ENCODE measurements at regions of chr19 and their contacts with region 1.

Region 1: GRCh38 chr19:7943444-7944176 is at the start of gene TIMM44:
- DNase-seq: peak; percentile 95 to 100 (median 97)
- ATAC-seq: peak; percentile 96
- H3K4me3 ChIP-seq: peak within 1 kb of the TSS; percentile 97
- H3K4me3 Mint-ChIP-seq: peak within 1 kb of the TSS; percentile 95
- H3K27ac ChIP-seq: peak within 1 kb of the TSS; percentile 96 to 97
- H3K27ac Mint-ChIP-seq: peak within 1 kb of the TSS; percentile 87
- H3K4me1 ChIP-seq: peaks cover 30% of the 10 kb centered on the region
- H3K4me1 Mint-ChIP-seq: peaks cover 36% of the 10 kb centered on the region
- H3K27me3 ChIP-seq: no peaks in the 10 kb centered on the region
- H3K27me3 Mint-ChIP-seq: no peaks in the 10 kb centered on the region
- CTCF ChIP-seq: no peak
- total RNA-seq, gene TIMM44: 83.9 to 85.0 TPM

Region 2: GRCh38 chr19:7104747-7105447 is 838.7 kb before region 1 on chr19:
- CTCF ChIA-PET with region 1: no interaction called
- POLR2A ChIA-PET with region 1: no interaction called
- intact Hi-C with region 1: loop called in 1 of 2 experiments (anchors 10 kb)
- DNase-seq: peak in 1 of 14 experiments; percentile 10
- ATAC-seq: no peak
- H3K4me3 ChIP-seq: no peak overlapping the region
- H3K4me3 Mint-ChIP-seq: no peak overlapping the region
- H3K27ac ChIP-seq: no peak overlapping the region
- H3K27ac Mint-ChIP-seq: no peak overlapping the region
- H3K4me1 ChIP-seq: peaks cover 10% of the 10 kb centered on the region
- H3K4me1 Mint-ChIP-seq: peaks cover 22% of the 10 kb centered on the region
- H3K27me3 ChIP-seq: no peaks in the 10 kb centered on the region
- H3K27me3 Mint-ChIP-seq: no peaks in the 10 kb centered on the region
- CTCF ChIP-seq: no peak

Region 3: DNA sequence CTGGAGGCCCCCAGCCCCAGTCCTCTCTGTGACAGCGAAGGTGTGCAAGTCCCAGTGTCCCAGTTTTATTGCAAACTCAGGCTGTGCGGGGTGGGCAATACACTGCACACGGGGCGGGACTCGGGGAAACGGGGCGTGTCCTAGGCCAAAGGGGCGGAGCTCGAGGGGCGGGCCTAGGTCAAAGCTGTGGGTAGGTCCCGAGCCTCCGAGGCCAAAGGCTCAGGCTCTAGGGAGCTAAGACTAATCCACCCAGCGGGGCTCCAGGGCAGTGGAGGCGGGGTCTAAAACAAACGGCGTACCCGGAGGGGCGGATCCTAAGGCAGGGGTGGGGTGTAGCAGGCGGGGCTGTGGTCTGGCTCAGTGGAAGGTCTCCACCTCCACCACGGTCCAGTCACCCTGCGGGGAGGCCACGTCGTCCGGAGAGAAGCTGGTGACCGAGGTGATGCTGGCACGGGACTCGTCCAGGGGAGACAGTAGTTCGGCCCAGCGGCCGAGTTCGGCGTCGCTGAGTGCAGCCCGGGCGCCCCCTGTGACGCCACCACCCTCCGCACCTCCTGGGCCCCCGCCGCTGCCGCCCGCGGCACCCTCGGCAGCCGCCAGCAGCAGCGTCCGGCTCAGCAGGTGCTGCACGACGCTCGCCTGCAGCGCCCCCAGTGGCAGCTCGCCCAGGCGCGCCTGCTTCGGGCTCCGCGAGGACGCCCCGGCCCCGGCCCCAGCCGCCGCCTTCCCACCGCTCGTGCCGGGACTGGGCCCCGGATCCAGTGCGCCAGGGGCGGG is 74.7 kb before region 1 on chr19:
- CTCF ChIA-PET with region 1: interaction called, 5 read pairs
- POLR2A ChIA-PET with region 1: interaction called, 17 read pairs
- intact Hi-C with region 1: loop called in 1 of 2 experiments (anchors 2 kb)
- DNase-seq: peak; percentile 69 to 96 (median 84)
- ATAC-seq: peak; percentile 69
- H3K4me3 ChIP-seq: peak overlapping the region; percentile 62
- H3K4me3 Mint-ChIP-seq: peak overlapping the region; percentile 87
- H3K27ac ChIP-seq: peak overlapping the region; percentile 67 to 72
- H3K27ac Mint-ChIP-seq: peak overlapping the region; percentile 80
- H3K4me1 ChIP-seq: peaks cover 70% of the 10 kb centered on the region
- H3K4me1 Mint-ChIP-seq: peaks cover 39% of the 10 kb centered on the region
- H3K27me3 ChIP-seq: peaks cover 20 to 21% of the 10 kb centered on the region in 2 experiments
- H3K27me3 Mint-ChIP-seq: peaks cover 33% of the 10 kb centered on the region
- CTCF ChIP-seq: peak; percentile 69

Region 4: GRCh38 chr19:7883796-7884570 is 59.6 kb before region 1 on chr19:
- CTCF ChIA-PET with region 1: no interaction called
- POLR2A ChIA-PET with region 1: no interaction called
- intact Hi-C with region 1: no loop called
- DNase-seq: no peak
- ATAC-seq: no peak
- H3K4me3 ChIP-seq: no peak overlapping the region
- H3K4me3 Mint-ChIP-seq: no peak overlapping the region
- H3K27ac ChIP-seq: no peak overlapping the region
- H3K27ac Mint-ChIP-seq: no peak overlapping the region
- H3K4me1 ChIP-seq: peaks cover 9% of the 10 kb centered on the region
- H3K4me1 Mint-ChIP-seq: no peaks in the 10 kb centered on the region
- H3K27me3 ChIP-seq: peaks cover 14 to 16% of the 10 kb centered on the region in 2 experiments
- H3K27me3 Mint-ChIP-seq: peaks cover 8% of the 10 kb centered on the region
- CTCF ChIP-seq: no peak

Region 5: GRCh38 chr19:7919610-7920518 is 23.7 kb before region 1 on chr19 and contains the start of gene SNAPC2:
- CTCF ChIA-PET with region 1: interaction called, 22 read pairs
- POLR2A ChIA-PET with region 1: interaction called, 47 read pairs
- intact Hi-C with region 1: no loop called
- DNase-seq: peak; percentile 93 to 98 (median 96)
- ATAC-seq: peak; percentile 64
- H3K4me3 ChIP-seq: peak within 1 kb of the TSS; percentile 69
- H3K4me3 Mint-ChIP-seq: peak within 1 kb of the TSS; percentile 94
- H3K27ac ChIP-seq: peak within 1 kb of the TSS; percentile 78 to 79
- H3K27ac Mint-ChIP-seq: peak within 1 kb of the TSS; percentile 79
- H3K4me1 ChIP-seq: peaks cover 70% of the 10 kb centered on the region
- H3K4me1 Mint-ChIP-seq: peaks cover 37% of the 10 kb centered on the region
- H3K27me3 ChIP-seq: peaks cover 34 to 35% of the 10 kb centered on the region in 2 experiments
- H3K27me3 Mint-ChIP-seq: peaks cover 37% of the 10 kb centered on the region
- CTCF ChIP-seq: no peak
- total RNA-seq, gene SNAPC2: 9.9 to 10.9 TPM

Region 6: GRCh38 chr19:8005534-8006256 is 62.1 kb after region 1 on chr19 and contains the start of gene ELAVL1:
- CTCF ChIA-PET with region 1: interaction called, 23 read pairs
- POLR2A ChIA-PET with region 1: interaction called, 14 read pairs
- intact Hi-C with region 1: loop called (anchors 1 to 10 kb)
- DNase-seq: peak; percentile 72 to 96 (median 88)
- ATAC-seq: peak; percentile 94
- H3K4me3 ChIP-seq: peak within 1 kb of the TSS; percentile 84
- H3K4me3 Mint-ChIP-seq: peak within 1 kb of the TSS; percentile 95
- H3K27ac ChIP-seq: peak within 1 kb of the TSS; percentile 61 to 74
- H3K27ac Mint-ChIP-seq: peak within 1 kb of the TSS; percentile 84
- H3K4me1 ChIP-seq: peaks cover 45% of the 10 kb centered on the region
- H3K4me1 Mint-ChIP-seq: peaks cover 42% of the 10 kb centered on the region
- H3K27me3 ChIP-seq: no peaks in the 10 kb centered on the region
- H3K27me3 Mint-ChIP-seq: no peaks in the 10 kb centered on the region
- CTCF ChIP-seq: no peak
- total RNA-seq, gene ELAVL1: 17.1 to 20.8 TPM

Region 7: DNA sequence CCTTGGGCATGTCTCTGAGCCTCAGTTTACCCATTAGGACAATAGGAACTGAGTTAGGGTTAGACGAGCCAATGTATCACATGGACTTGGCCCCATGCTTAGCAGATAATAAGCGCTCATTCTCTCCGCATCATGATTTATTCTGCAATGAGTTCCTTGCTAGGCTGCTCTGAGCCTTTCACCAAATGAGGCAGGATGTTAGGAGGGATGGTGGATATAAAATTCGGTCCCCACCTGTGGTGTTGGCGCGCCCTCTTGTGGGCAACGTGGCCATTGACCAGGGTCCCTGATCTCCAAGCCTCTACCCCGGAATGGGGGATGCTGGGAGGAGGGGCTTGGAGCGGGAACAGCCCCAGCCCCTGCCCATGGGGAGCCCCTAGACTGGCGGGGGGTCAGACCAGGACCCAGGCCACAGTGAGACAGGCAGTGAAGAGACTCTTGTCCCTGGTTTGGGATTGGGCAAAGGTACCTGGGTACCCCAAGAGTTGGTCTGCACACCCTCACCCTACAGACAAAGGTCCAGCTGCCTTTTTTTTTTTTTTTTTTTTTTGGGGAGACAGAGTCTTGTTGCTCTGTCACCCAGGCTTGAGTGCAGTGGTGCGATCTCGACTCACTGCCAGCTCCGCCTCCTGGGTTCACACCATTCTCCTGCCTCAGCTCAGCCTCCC is 309.4 kb after region 1 on chr19:
- CTCF ChIA-PET with region 1: interaction called, 3 read pairs
- POLR2A ChIA-PET with region 1: no interaction called
- intact Hi-C with region 1: loop called in 1 of 2 experiments (anchors 1 kb)
- DNase-seq: peak; percentile 74 to 91 (median 82)
- ATAC-seq: peak; percentile 95
- H3K4me3 ChIP-seq: no peak overlapping the region
- H3K4me3 Mint-ChIP-seq: no peak overlapping the region
- H3K27ac ChIP-seq: no peak overlapping the region
- H3K27ac Mint-ChIP-seq: no peak overlapping the region
- H3K4me1 ChIP-seq: peaks cover 12% of the 10 kb centered on the region
- H3K4me1 Mint-ChIP-seq: peaks cover 4% of the 10 kb centered on the region
- H3K27me3 ChIP-seq: no peaks in the 10 kb centered on the region
- H3K27me3 Mint-ChIP-seq: no peaks in the 10 kb centered on the region
- CTCF ChIP-seq: peak; percentile 95

Region 8: GRCh38 chr19:8832132-8833021 is 888.8 kb after region 1 on chr19 and contains the starts of genes MBD3L1 and ZNF558:
- CTCF ChIA-PET with region 1: no interaction called
- POLR2A ChIA-PET with region 1: no interaction called
- intact Hi-C with region 1: loop called in 1 of 2 experiments (anchors 5 kb)
- DNase-seq: peak; percentile 95 to 100 (median 99)
- ATAC-seq: peak; percentile 88
- H3K4me3 ChIP-seq: peak within 1 kb of the TSS; percentile 90
- H3K4me3 Mint-ChIP-seq: peak within 1 kb of the TSS; percentile 97
- H3K27ac ChIP-seq: peak within 1 kb of the TSS; percentile 89 to 92
- H3K27ac Mint-ChIP-seq: peak within 1 kb of the TSS; percentile 95
- H3K4me1 ChIP-seq: peaks cover 15% of the 10 kb centered on the region
- H3K4me1 Mint-ChIP-seq: peaks cover 31% of the 10 kb centered on the region
- H3K27me3 ChIP-seq: no peaks in the 10 kb centered on the region
- H3K27me3 Mint-ChIP-seq: no peaks in the 10 kb centered on the region
- CTCF ChIP-seq: peak; percentile 48
- total RNA-seq, gene MBD3L1: not detected
- total RNA-seq, gene ZNF558: 22.2 to 23.3 TPM